SK-N-SH (cell line): ENCODE measurements at regions of chr22 and their contacts with region 1.

Region 1: GRCh38 chr22:46006379-46007002 is 29.5 kb upstream of the WNT7B start:
- DNase-seq: peak; percentile 96
- H3K4me3 ChIP-seq: peak overlapping the region; percentile 13 to 54; a peak in 2 of 4 replicates
- H3K27ac ChIP-seq: peak overlapping the region; percentile 99 to 100
- H3K4me1 ChIP-seq: peaks cover 46 to 57% of the 10 kb centered on the region in 2 experiments; a peak in 3 of 4 replicates
- H3K27me3 ChIP-seq: no peaks in the 10 kb centered on the region
- CTCF ChIP-seq: peak; percentile 94
- EP300 ChIP-seq: peak in 1 of 2 experiments; percentile 53; a peak in 2 of 4 replicates
- RAD21 ChIP-seq: peak; percentile 86

Region 2: GRCh38 chr22:45994491-45995404 is 11.7 kb before region 1 on chr22:
- CTCF ChIA-PET with region 1: interaction called, 108 read pairs
- POLR2A ChIA-PET with region 1: interaction called, 13 read pairs
- DNase-seq: peak; percentile 88
- H3K4me3 ChIP-seq: no peak overlapping the region
- H3K27ac ChIP-seq: peak overlapping the region; percentile 96 to 97; a peak in 3 of 4 replicates
- H3K4me1 ChIP-seq: peaks cover 30 to 53% of the 10 kb centered on the region in 2 experiments
- H3K27me3 ChIP-seq: no peaks in the 10 kb centered on the region
- CTCF ChIP-seq: peak; percentile 88
- EP300 ChIP-seq: no peak
- RAD21 ChIP-seq: peak; percentile 95

Region 3: DNA sequence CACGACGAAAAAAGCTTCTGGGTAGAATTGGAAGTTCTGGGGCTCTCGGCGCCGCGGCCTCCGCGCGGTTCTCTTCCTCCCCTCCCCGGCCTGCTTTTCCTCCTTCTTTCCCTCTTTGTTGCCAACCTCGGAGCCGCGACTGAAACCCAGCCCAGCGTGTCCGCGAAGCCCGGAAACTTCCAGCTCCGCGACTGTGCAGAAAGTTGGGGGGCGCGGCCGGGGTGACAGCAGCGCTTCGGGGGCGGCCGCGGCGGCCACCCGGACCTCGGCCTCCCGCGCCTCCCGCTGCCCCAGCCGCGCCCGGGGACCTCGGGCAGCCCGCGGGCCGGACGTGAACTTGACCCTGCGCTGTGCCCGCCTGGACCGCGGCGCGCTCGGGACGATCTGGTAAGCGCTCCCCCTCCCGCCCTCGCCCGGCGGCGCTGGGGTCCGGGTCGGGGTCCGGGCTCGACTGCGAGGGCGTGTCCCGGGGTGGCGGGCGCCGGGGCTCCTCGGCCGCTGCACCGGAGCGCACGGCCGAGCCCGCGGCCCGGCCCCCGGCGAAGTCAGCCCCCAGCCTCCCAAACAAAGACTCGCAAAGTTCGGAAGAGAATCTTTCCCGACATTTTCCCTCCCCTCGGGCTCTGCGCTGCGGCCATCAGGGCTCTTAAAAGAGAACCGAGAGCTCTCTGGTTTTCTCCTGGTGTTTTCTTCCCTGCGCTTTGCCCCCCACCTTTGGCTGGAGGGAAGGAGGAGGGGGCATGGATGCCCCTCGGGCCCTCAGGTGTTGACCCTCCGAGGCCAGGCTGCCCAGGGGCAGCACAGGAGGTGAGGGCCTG is 38.3 kb after region 1 on chr22:
- CTCF ChIA-PET with region 1: interaction called, 14 read pairs
- POLR2A ChIA-PET with region 1: interaction called, 5 read pairs
- DNase-seq: no peak
- H3K4me3 ChIP-seq: no peak overlapping the region; a peak in 1 of 4 replicates
- H3K27ac ChIP-seq: no peak overlapping the region
- H3K4me1 ChIP-seq: peaks cover 0 to 18% of the 10 kb centered on the region in 2 experiments; a peak in 3 of 4 replicates
- H3K27me3 ChIP-seq: no peaks in the 10 kb centered on the region
- CTCF ChIP-seq: no peak
- EP300 ChIP-seq: no peak
- RAD21 ChIP-seq: no peak

Region 4: DNA sequence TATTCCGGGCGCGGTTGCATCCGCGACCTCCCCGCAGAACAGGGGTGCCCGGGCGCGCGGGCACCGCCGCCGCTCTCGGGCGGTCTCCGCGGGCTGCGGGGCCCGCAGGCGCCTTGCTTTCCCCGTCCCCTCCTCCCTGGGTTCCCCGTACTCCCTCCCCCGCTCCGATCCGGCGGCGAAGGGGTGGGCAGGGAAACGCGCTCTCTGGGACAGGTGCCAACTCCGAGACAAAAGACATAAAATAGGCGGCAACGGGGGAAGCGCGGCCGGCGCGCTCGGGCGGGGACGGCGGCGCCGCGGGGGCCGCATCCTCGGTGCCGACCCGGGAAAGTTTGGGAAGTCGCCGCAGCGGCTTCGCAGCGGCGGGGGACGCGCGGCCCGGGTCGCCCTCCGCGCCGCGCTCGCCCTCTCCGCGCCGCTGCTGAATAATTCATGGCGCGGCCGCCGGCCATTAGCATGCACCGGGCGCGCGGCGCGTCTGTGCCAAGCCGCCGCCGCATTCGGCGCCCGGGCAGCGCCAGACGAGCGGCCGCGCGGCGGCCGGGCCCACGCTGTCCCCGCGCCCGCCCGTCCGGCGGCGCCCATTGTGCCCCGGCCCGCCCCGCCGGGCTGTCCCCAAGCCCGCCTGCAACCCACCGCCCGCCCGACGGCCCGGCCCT is 65.1 kb after region 1 on chr22:
- CTCF ChIA-PET with region 1: interaction called, 39 read pairs
- POLR2A ChIA-PET with region 1: interaction called, 38 read pairs
- DNase-seq: peak; percentile 88
- H3K4me3 ChIP-seq: peak overlapping the region; percentile 90 to 92
- H3K27ac ChIP-seq: peak overlapping the region; percentile 96 to 100
- H3K4me1 ChIP-seq: peaks cover 6 to 33% of the 10 kb centered on the region in 2 experiments; a peak in 3 of 4 replicates
- H3K27me3 ChIP-seq: no peaks in the 10 kb centered on the region
- CTCF ChIP-seq: no peak
- EP300 ChIP-seq: peak; percentile 15 to 57; a peak in 1 of 4 replicates
- RAD21 ChIP-seq: no peak; the same call in 1 of the 2 replicates

Region 5: GRCh38 chr22:46108564-46109473 is 102.3 kb after region 1 on chr22:
- CTCF ChIA-PET with region 1: interaction called, 102 read pairs
- POLR2A ChIA-PET with region 1: interaction called, 6 read pairs
- DNase-seq: peak; percentile 75
- H3K4me3 ChIP-seq: no peak overlapping the region
- H3K27ac ChIP-seq: peak overlapping the region; percentile 60 to 98
- H3K4me1 ChIP-seq: peaks cover 43 to 92% of the 10 kb centered on the region in 2 experiments
- H3K27me3 ChIP-seq: no peaks in the 10 kb centered on the region
- CTCF ChIP-seq: peak; percentile 17; the same call in 1 of the 2 replicates
- EP300 ChIP-seq: no peak
- RAD21 ChIP-seq: no peak

Region 6: DNA sequence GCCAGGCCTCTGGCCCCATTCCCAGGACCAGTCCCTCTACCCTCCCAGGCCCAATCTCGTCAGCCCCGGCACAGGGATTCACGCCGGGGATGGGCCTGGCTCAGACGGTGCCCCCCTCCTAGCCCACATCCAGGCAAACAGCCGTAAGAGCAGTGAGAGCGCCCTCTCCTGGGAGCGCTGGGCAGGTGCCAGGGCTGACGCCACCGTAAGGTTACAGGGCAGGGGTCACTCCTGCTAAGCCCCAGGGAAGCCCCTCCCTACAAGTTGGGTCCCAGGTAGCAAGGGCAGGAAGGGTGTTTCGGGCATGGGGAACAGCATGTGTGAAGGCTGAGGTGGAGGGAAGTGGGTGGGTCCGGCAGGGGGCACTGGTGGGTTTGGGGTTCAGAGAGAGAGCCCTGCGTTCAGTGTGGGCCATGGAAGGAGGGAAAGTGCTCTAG is 124.7 kb after region 1 on chr22:
- CTCF ChIA-PET with region 1: interaction called, 12 read pairs
- POLR2A ChIA-PET with region 1: no interaction called
- DNase-seq: peak; percentile 76
- H3K4me3 ChIP-seq: no peak overlapping the region; a peak in 1 of 4 replicates
- H3K27ac ChIP-seq: no peak overlapping the region
- H3K4me1 ChIP-seq: no peaks in the 10 kb centered on the region; a peak in 1 of 4 replicates
- H3K27me3 ChIP-seq: no peaks in the 10 kb centered on the region
- CTCF ChIP-seq: peak; percentile 56
- EP300 ChIP-seq: no peak
- RAD21 ChIP-seq: peak; percentile 2; the same call in 1 of the 2 replicates

Region 7: DNA sequence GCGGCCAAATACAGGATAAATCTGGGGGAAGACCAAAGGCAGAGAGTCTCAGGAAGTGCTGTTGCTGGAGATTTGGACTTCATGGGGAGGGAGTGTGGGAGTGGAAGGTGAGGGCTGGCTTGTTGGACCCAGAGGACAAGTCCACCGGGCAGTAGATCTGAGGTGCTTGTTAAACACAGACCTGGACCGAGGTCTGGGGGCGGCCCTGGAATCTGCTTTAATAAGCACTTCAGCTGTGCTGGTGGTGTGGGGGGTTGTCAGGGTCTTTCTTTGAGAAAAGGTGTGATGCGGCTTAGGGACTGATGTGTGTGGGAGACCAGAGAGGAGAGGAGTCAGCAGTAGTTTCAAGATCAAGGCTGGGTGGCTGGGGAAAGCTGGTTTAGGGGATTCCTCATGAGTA is 333.5 kb after region 1 on chr22:
- CTCF ChIA-PET with region 1: no interaction called
- POLR2A ChIA-PET with region 1: no interaction called
- DNase-seq: no peak
- H3K4me3 ChIP-seq: no peak overlapping the region
- H3K27ac ChIP-seq: no peak overlapping the region
- H3K4me1 ChIP-seq: peaks cover 6 to 12% of the 10 kb centered on the region in 2 experiments; a peak in 3 of 4 replicates
- H3K27me3 ChIP-seq: no peaks in the 10 kb centered on the region
- CTCF ChIP-seq: no peak
- EP300 ChIP-seq: no peak
- RAD21 ChIP-seq: no peak